Activated T-helper 1 cell treated with anti-CD3 and anti-CD28 coated beads, Interleukin-12 subunit alpha, Interleukin-12 subunit beta, Interleukin-2, Interleukin-4 antibody, amounts not matched to agents 30 ng/mL and 10 ng/mL and 1 ng/mL, durations not matched to agents 14 hours and 24 hours and 36 hours (primary cell): ENCODE measurements at regions of chr19 and their contacts with region 1.

Region 1: GRCh38 chr19:35468637-35469036 is 20.6 kb downstream of the FFAR2 start:
- DNase-seq: peak; percentile 47
- H3K4me3 Mint-ChIP-seq: no peak overlapping the region
- H3K27ac Mint-ChIP-seq: no peak overlapping the region
- H3K4me1 Mint-ChIP-seq: peaks cover 15% of the 10 kb centered on the region
- H3K27me3 Mint-ChIP-seq: peaks cover 11% of the 10 kb centered on the region

Region 2: GRCh38 chr19:35306473-35307246 is 162.0 kb before region 1 on chr19:
- intact Hi-C with region 1: loop called (anchors 5 kb)
- DNase-seq: no peak
- H3K4me3 Mint-ChIP-seq: no peak overlapping the region
- H3K27ac Mint-ChIP-seq: no peak overlapping the region
- H3K4me1 Mint-ChIP-seq: no peaks in the 10 kb centered on the region
- H3K27me3 Mint-ChIP-seq: peaks cover 2% of the 10 kb centered on the region

Region 3: DNA sequence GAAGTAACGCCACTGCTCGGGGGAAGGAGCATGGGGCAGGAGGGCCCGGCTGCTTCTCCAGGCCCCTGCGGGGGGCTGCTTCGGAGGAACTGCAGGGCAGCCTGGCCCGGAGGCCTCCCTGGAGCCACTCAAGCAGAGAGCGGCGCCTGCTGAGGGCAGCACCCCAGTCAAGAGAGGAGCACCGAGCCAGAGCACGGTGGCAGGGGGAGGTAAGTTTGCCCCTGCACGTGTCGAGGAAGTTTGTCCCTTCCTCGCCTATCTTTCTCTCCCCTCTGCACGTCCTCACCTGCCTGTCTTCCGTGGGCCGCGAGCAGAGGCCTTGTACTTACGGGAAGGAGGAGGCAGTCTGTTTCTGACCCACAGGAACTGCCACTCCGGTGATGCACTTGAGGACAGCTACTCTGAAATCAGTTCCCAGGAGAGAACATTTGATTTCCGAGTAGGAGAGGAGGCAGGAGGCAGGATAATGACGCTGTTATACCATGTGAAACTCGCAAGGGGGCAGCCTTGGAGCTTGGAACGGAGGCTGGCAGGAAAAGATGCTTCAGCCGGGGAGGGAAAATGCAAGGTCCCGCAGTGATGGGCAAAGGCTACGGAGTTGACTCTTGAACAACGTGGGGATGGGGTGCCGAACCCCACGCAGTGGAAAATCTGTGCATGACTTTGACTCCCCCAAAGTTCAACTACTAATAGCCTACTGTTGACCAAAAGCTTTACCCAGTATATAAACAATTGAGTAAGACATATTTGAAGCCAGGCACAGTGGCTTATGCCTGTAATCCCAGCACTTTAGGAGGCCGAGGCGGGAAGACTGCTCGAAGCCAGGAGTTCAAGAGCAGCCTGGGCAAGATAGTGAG is 116.0 kb before region 1 on chr19:
- intact Hi-C with region 1: loop called (anchors 1 kb)
- DNase-seq: peak; percentile 55
- H3K4me3 Mint-ChIP-seq: no peak overlapping the region
- H3K27ac Mint-ChIP-seq: peak overlapping the region; percentile 62
- H3K4me1 Mint-ChIP-seq: peaks cover 25% of the 10 kb centered on the region
- H3K27me3 Mint-ChIP-seq: peaks cover 2% of the 10 kb centered on the region

Region 4: DNA sequence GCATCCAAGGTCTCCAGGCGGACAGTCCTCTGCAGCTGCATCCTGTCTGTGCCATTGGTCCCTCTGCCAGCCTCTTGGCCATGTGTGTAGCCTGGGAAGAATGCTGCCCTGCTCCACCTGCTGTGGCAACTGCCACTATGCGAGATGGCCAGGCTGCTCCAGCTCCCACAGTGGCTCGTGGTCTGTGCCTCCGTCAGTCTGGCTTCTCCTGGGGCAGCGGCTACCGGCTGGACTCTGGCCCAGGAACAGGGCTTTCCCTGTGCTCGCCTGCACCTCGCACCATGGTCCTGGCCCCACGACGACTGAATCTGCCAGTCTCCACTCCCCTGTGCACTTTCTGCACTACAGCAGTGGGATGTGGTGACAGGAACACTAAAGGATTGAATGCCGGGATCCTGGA is 47.3 kb before region 1 on chr19:
- intact Hi-C with region 1: loop called (anchors 5 kb)
- DNase-seq: no peak
- H3K4me3 Mint-ChIP-seq: no peak overlapping the region
- H3K27ac Mint-ChIP-seq: no peak overlapping the region
- H3K4me1 Mint-ChIP-seq: no peaks in the 10 kb centered on the region
- H3K27me3 Mint-ChIP-seq: peaks cover 14% of the 10 kb centered on the region

Region 5: GRCh38 chr19:35451338-35452096 is 17.1 kb before region 1 on chr19:
- intact Hi-C with region 1: loop called (anchors 2 kb)
- DNase-seq: no peak
- H3K4me3 Mint-ChIP-seq: no peak overlapping the region
- H3K27ac Mint-ChIP-seq: no peak overlapping the region
- H3K4me1 Mint-ChIP-seq: peaks cover 15% of the 10 kb centered on the region
- H3K27me3 Mint-ChIP-seq: peaks cover 30% of the 10 kb centered on the region

Region 6: GRCh38 chr19:35495107-35496064 is 26.7 kb after region 1 on chr19:
- intact Hi-C with region 1: loop called (anchors 2 kb)
- DNase-seq: peak; percentile 47
- H3K4me3 Mint-ChIP-seq: no peak overlapping the region
- H3K27ac Mint-ChIP-seq: no peak overlapping the region
- H3K4me1 Mint-ChIP-seq: peaks cover 11% of the 10 kb centered on the region
- H3K27me3 Mint-ChIP-seq: peaks cover 11% of the 10 kb centered on the region

Region 7: DNA sequence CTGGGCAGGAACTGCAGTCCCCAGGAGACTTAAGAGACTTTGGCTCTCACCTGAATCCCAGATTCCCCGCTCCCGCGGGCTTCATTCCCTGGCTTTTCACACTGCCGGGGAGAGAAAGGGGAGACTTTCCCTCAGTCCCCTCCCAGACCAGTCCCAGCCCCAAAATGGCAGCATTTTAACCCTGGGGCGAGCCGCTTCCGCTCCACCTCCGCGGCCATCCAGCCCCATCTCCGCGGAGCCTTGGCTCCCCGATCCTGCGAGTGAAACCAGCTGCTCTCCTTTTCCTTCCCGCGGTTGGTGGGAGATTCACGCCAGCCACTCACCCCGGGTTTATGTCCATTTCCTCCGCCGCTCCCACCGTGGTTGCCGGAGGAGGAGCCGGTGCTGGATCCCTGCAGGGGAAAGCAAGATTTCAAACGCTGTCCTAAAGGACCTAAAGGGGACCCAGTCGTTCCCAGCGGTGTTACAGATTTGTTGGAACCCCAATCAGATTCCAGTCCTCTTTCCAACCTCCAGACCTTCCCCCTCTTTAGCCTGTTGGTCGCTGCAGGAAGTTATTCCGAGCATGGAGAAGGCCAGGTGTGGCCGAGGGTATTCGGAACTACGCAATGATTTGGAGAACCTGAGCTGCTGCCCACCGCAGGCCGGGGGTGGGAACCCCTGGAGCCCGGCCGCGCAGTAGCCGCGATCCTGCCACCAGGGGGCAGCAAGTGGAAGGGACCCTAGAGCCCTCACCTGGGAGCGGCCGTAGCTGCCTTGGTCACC is 41.4 kb after region 1 on chr19:
- intact Hi-C with region 1: no loop called
- DNase-seq: peak; percentile 46
- H3K4me3 Mint-ChIP-seq: peak overlapping the region; percentile 57
- H3K27ac Mint-ChIP-seq: no peak overlapping the region
- H3K4me1 Mint-ChIP-seq: peaks cover 6% of the 10 kb centered on the region
- H3K27me3 Mint-ChIP-seq: peaks cover 45% of the 10 kb centered on the region